Naive thymus-derived CD4-positive, alpha-beta T cell (primary cell): ENCODE measurements at regions of chr11 and their contacts with region 1.

Region 1: GRCh38 chr11:67265633-67266423 is 445 bp upstream of the GRK2 start:
- DNase-seq: peak; percentile 50 to 91 (median 78)
- ATAC-seq: peak; percentile 76
- H3K4me3 ChIP-seq: peak overlapping the region; percentile 25
- H3K4me3 Mint-ChIP-seq: peak overlapping the region; percentile 75 to 99 (median 84)
- H3K27ac ChIP-seq: peak overlapping the region; percentile 65
- H3K27ac Mint-ChIP-seq: peak overlapping the region; percentile 72 to 94 (median 81)
- H3K4me1 ChIP-seq: peaks cover 42 to 56% of the 10 kb centered on the region in 2 donors
- H3K4me1 Mint-ChIP-seq: peaks cover 22 to 77% (median 65%) of the 10 kb centered on the region in 7 donors
- H3K27me3 ChIP-seq: no peaks in the 10 kb centered on the region
- H3K27me3 Mint-ChIP-seq: no peaks in the 10 kb centered on the region

Region 2: DNA sequence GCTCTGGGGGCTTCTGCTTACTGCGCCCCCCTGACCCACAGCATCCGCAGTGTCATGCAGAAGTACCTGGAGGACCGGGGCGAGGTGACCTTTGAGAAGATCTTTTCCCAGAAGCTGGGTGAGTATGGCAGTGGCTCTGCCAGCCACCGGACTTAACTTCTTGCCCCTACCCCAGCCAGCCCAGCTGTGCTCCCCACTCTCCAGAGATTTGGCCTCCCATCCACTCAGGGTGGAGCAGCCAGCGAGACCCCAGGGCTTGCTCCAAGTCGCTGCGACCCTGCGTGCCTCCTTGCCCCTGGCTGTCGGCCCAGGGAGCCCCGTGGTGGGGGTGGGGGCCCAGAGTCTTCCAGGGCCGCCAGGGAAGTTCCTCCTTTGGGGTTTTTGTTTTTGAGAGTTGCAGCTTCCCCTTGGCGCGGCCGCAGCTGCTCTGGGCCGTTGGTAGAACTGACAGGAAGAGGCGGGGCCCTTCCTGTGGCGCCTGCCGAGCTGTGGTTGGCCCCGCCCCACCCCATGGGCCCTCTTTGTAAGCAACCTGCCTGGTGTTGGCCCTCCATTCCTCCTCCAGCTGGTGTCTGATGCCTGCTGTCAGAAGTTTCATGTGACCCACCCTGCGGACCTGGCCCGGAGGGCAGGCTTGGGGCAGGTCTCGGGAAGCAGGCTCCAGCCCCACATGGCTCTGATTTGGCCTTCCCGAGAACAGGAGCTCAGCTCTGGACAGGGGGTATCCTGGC is 11.6 kb after region 1 on chr11:
- CTCF ChIA-PET with region 1: interaction called, 19 read pairs
- POLR2A ChIA-PET with region 1: interaction called, 729 read pairs
- intact Hi-C with region 1: loop called (anchors 1 kb)
- DNase-seq: peak; percentile 79 to 94 (median 93)
- ATAC-seq: peak; percentile 97
- H3K4me3 ChIP-seq: peak overlapping the region; percentile 90
- H3K4me3 Mint-ChIP-seq: peak overlapping the region; percentile 62 to 99 (median 88)
- H3K27ac ChIP-seq: peak overlapping the region; percentile 93
- H3K27ac Mint-ChIP-seq: peak overlapping the region; percentile 87 to 100 (median 97)
- H3K4me1 ChIP-seq: peaks cover 79 to 87% of the 10 kb centered on the region in 2 donors
- H3K4me1 Mint-ChIP-seq: peaks cover 47 to 83% (median 66%) of the 10 kb centered on the region in 7 donors
- H3K27me3 ChIP-seq: no peaks in the 10 kb centered on the region
- H3K27me3 Mint-ChIP-seq: no peaks in the 10 kb centered on the region

Region 3: DNA sequence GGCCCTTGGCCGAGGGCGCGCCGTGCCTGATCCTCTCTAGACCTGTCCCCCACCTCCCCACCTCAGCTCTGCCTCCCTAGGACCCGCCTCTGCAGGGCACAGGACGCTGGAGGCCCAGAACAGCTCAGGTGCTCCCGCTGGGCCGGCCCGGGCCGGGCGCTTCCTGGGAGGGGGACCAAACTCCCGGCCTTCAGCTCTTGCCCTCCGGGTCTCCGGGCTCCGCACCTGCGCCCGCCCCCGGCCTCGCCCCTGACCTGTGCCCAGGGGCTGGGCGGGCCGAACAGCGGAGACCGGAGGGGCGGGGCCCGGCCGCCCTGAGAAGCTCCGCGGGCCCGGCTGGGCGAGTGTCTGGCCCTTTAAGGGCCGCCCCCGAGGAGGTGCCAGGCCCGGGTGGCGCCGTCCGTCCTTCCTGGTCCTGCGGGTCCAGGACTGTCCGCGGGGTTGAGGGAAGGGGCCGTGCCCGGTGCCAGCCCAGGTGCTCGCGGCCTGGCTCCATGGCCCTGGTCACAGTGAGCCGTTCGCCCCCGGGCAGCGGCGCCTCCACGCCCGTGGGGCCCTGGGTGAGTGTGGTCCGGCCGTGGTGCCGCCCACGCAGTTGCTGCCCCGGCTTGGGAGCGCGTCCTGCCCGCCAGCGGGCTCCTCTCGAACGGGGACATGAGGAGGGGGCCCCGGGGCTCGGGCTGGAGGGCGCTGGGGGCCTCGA is 37.5 kb after region 1 on chr11 and contains the start of gene SSH3:
- CTCF ChIA-PET with region 1: interaction called, 6 read pairs
- POLR2A ChIA-PET with region 1: interaction called, 15 read pairs
- intact Hi-C with region 1: no loop called
- DNase-seq: peak in 6 of 9 donors; percentile 17 to 63 (median 24)
- ATAC-seq: peak; percentile 80
- H3K4me3 ChIP-seq: peak within 1 kb of the TSS; percentile 61
- H3K4me3 Mint-ChIP-seq: peak within 1 kb of the TSS; percentile 25 to 79 (median 68)
- H3K27ac ChIP-seq: peak within 1 kb of the TSS; percentile 76
- H3K27ac Mint-ChIP-seq: peak within 1 kb of the TSS in 6 of 9 donors; percentile 17 to 74 (median 55)
- H3K4me1 ChIP-seq: peaks cover 6 to 9% of the 10 kb centered on the region in 2 donors
- H3K4me1 Mint-ChIP-seq: peaks cover 0 to 18% (median 11%) of the 10 kb centered on the region in 7 donors
- H3K27me3 ChIP-seq: no peaks in the 10 kb centered on the region
- H3K27me3 Mint-ChIP-seq: no peaks in the 10 kb centered on the region
- total RNA-seq, gene SSH3: 8.8 to 23.8 (median 15.0) TPM

Region 4: GRCh38 chr11:67322710-67323109 is 56.9 kb after region 1 on chr11:
- CTCF ChIA-PET with region 1: interaction called, 85 read pairs
- POLR2A ChIA-PET with region 1: interaction called, 55 read pairs
- intact Hi-C with region 1: loop called (anchors 1 kb)
- DNase-seq: no peak
- ATAC-seq: no peak
- H3K4me3 ChIP-seq: no peak overlapping the region
- H3K4me3 Mint-ChIP-seq: peak overlapping the region in 1 of 10 donors; percentile 63
- H3K27ac ChIP-seq: no peak overlapping the region
- H3K27ac Mint-ChIP-seq: peak overlapping the region in 1 of 9 donors; percentile 41
- H3K4me1 ChIP-seq: peaks cover 4 to 7% of the 10 kb centered on the region in 2 donors
- H3K4me1 Mint-ChIP-seq: peaks cover 8 to 19% (median 10%) of the 10 kb centered on the region in 7 donors
- H3K27me3 ChIP-seq: no peaks in the 10 kb centered on the region
- H3K27me3 Mint-ChIP-seq: peaks cover 0 to 10% (median 0%) of the 10 kb centered on the region in 5 donors

Region 5: GRCh38 chr11:67382276-67383136 is 116.7 kb after region 1 on chr11:
- CTCF ChIA-PET with region 1: interaction called, 34 read pairs
- POLR2A ChIA-PET with region 1: interaction called, 3 read pairs
- intact Hi-C with region 1: loop called (anchors 1 kb)
- DNase-seq: peak; percentile 67 to 86 (median 79)
- ATAC-seq: peak; percentile 96
- H3K4me3 ChIP-seq: no peak overlapping the region
- H3K4me3 Mint-ChIP-seq: no peak overlapping the region
- H3K27ac ChIP-seq: no peak overlapping the region
- H3K27ac Mint-ChIP-seq: peak overlapping the region in 2 of 9 donors; percentile 1 to 79
- H3K4me1 ChIP-seq: peaks cover 0 to 5% of the 10 kb centered on the region in 2 donors
- H3K4me1 Mint-ChIP-seq: peaks cover 4 to 20% (median 8%) of the 10 kb centered on the region in 7 donors
- H3K27me3 ChIP-seq: no peaks in the 10 kb centered on the region
- H3K27me3 Mint-ChIP-seq: peaks cover 0 to 38% (median 0%) of the 10 kb centered on the region in 5 donors